MCF 10A (cell line): ENCODE measurements at regions of chr1 and their contacts with region 1.

Region 1: GRCh38 chr1:152440635-152441471 is 26.8 kb upstream of the CRNN start:
- DNase-seq: peak; percentile 89
- H3K4me3 Mint-ChIP-seq: no peak overlapping the region
- H3K27ac Mint-ChIP-seq: no peak overlapping the region
- H3K4me1 Mint-ChIP-seq: peaks cover 24% of the 10 kb centered on the region
- H3K27me3 Mint-ChIP-seq: no peaks in the 10 kb centered on the region
- CTCF ChIP-seq: peak; percentile 91

Region 2: GRCh38 chr1:152227310-152227928 is 213.4 kb before region 1 on chr1:
- CTCF ChIA-PET with region 1: interaction called, 19 read pairs
- POLR2A ChIA-PET with region 1: no interaction called
- intact Hi-C with region 1: no loop called
- DNase-seq: peak; percentile 66
- H3K4me3 Mint-ChIP-seq: no peak overlapping the region
- H3K27ac Mint-ChIP-seq: no peak overlapping the region
- H3K4me1 Mint-ChIP-seq: peaks cover 17% of the 10 kb centered on the region
- H3K27me3 Mint-ChIP-seq: no peaks in the 10 kb centered on the region
- CTCF ChIP-seq: peak; percentile 79

Region 3: GRCh38 chr1:152356736-152357135 is 84.1 kb before region 1 on chr1:
- CTCF ChIA-PET with region 1: interaction called, 13 read pairs
- POLR2A ChIA-PET with region 1: no interaction called
- intact Hi-C with region 1: no loop called
- DNase-seq: no peak
- H3K4me3 Mint-ChIP-seq: no peak overlapping the region
- H3K27ac Mint-ChIP-seq: no peak overlapping the region
- H3K4me1 Mint-ChIP-seq: no peaks in the 10 kb centered on the region
- H3K27me3 Mint-ChIP-seq: peaks cover 15% of the 10 kb centered on the region
- CTCF ChIP-seq: no peak

Region 4: DNA sequence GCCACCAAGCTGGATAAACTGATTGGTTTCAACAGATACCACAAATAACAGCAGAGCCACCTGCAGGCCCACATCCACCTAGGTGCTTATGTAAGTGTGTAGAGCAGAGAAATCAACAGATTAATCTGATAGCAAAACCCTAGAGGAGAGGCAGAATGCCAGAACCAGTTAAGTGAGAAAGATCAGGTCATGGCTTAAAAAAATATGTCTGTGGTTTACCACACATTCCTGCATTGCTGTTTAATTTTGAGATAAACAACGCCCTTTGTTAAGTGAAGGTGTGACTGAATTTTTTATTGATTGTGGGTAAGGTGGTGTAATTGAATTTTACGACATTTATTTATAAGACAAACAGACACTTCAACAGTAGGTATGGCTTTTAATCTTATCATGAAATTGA is 47.9 kb before region 1 on chr1:
- CTCF ChIA-PET with region 1: interaction called, 63 read pairs
- POLR2A ChIA-PET with region 1: no interaction called
- intact Hi-C with region 1: no loop called
- DNase-seq: peak; percentile 39
- H3K4me3 Mint-ChIP-seq: no peak overlapping the region
- H3K27ac Mint-ChIP-seq: no peak overlapping the region
- H3K4me1 Mint-ChIP-seq: peaks cover 23% of the 10 kb centered on the region
- H3K27me3 Mint-ChIP-seq: peaks cover 100% of the 10 kb centered on the region
- CTCF ChIP-seq: no peak

Region 5: GRCh38 chr1:152419917-152420316 is 20.9 kb before region 1 on chr1:
- CTCF ChIA-PET with region 1: interaction called, 28 read pairs
- POLR2A ChIA-PET with region 1: interaction called, 3 read pairs
- intact Hi-C with region 1: no loop called
- DNase-seq: no peak
- H3K4me3 Mint-ChIP-seq: no peak overlapping the region
- H3K27ac Mint-ChIP-seq: no peak overlapping the region
- H3K4me1 Mint-ChIP-seq: no peaks in the 10 kb centered on the region
- H3K27me3 Mint-ChIP-seq: peaks cover 57% of the 10 kb centered on the region
- CTCF ChIP-seq: no peak

Region 6: DNA sequence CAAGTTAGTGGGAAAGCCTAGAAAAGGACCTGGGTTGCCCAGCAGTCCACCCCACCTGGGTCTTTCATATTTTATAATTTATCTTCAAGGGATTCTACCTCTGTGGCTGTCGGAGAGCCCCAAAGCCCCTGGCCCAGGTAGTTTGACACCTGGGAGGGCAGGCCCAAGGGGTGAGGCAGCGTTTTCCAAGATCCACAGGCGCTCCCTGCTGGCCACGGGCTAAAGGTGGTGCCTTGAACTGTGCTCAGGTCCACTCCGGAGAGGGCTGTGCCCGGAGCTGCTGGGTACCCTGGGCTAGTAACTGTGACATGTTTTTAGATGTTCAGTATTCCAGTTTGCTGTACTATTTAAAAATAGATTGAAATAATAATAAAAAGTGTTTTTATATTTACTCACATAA is 10.4 kb after region 1 on chr1:
- CTCF ChIA-PET with region 1: interaction called, 23 read pairs
- POLR2A ChIA-PET with region 1: interaction called, 3 read pairs
- intact Hi-C with region 1: no loop called
- DNase-seq: peak; percentile 38
- H3K4me3 Mint-ChIP-seq: no peak overlapping the region
- H3K27ac Mint-ChIP-seq: no peak overlapping the region
- H3K4me1 Mint-ChIP-seq: no peaks in the 10 kb centered on the region
- H3K27me3 Mint-ChIP-seq: peaks cover 18% of the 10 kb centered on the region
- CTCF ChIP-seq: no peak